Cardiac septum (tissue), 1 donor: ENCODE measurements at regions of chr6 and their contacts with region 1.

Region 1: GRCh38 chr6:170529839-170530469 is 23.2 kb downstream of the PSMB1 start:
- DNase-seq: peak; percentile 87

Region 2: DNA sequence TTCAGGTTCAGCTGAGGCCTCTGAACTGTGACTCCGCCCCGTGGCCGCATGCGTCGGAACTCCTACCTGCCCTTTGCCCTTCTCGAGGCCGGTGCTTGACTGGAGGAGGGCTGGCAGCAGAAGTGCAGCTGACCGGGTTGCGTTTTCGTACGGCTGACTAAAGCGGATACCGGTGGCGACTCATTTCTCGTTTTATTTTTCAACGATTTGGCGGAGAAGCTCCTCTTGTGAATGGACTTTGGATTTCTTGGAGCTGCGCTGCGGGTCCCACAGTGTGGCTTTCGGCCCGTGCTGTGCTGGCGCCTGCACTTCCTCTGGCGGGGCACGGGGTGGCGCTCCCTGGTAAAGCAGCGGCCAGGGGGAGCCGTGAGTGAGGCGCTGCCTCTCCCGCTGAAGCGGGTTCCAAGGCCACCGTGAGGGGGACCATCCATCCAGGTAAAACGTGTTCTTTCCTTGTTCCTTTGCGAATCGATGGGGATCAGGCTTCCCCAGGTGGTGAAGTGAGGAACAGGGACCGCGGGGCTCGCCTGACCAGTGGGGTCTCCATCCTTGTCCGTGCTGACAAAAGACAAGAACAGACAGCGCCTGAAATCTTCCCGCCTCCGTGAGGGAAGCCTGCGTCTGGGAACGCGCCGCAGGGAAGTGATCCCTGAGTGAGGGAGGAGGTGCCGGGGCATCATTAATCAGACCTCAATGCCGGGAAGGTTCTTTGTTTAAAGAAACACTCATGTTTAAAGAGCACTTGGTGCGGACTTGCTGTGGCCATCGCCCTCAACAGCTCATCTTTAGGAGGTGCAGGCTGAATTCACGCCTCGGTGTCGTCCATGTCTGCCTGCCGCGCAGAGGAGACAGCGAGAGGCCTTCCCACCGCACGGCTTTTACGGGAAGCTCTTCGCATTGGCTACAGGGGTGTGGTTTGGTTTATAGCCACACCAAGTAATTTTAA is 739.7 kb before region 1 on chr6:
- intact Hi-C with region 1: loop called (anchors 2 kb)
- DNase-seq: peak; percentile 84

Region 3: GRCh38 chr6:169831450-169832246 is 698.3 kb before region 1 on chr6:
- intact Hi-C with region 1: loop called (anchors 2 kb)
- DNase-seq: peak; percentile 85

Region 4: GRCh38 chr6:170306324-170307079 is 223.5 kb before region 1 on chr6 and contains the start of gene FAM120B:
- intact Hi-C with region 1: loop called (anchors 5 kb)
- DNase-seq: peak; percentile 99
- total RNA-seq, gene FAM120B: 27.4 TPM

Region 5: DNA sequence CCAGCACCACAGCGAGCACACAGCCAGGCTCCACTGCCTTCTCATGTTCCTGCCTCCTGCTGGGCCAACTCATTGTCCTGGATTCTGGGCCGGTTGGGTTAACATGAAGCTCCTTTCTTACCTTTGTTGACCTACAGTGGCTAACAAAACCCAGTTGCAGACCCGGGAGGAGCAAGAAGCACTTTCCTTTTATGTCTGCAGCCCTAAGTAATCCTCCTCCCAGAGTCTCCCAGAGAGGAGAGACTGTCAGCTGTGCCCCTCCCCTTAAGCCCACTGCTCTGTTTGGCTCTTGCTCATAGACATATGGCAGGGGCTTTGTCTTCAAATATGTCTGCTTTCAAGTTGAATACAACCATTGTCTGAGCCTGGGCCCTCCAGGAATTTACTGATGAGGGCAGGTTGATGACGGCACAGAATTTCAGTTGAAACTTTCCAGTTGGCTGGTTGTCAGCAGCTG is 32.1 kb before region 1 on chr6:
- intact Hi-C with region 1: no loop called
- DNase-seq: no peak